ENCODE measurements at regions of chr14 and their contacts with region 1.

Region 1: GRCh38 chr14:69703047-69704039 is 63.6 kb upstream of the SRSF5 start:
- DNase-seq: no peak
- H3K4me3 Mint-ChIP-seq: no peak overlapping the region
- H3K27ac Mint-ChIP-seq: peak overlapping the region; percentile 60
- H3K4me1 Mint-ChIP-seq: peaks cover 69% of the 10 kb centered on the region
- H3K27me3 Mint-ChIP-seq: no peaks in the 10 kb centered on the region

Region 2: DNA sequence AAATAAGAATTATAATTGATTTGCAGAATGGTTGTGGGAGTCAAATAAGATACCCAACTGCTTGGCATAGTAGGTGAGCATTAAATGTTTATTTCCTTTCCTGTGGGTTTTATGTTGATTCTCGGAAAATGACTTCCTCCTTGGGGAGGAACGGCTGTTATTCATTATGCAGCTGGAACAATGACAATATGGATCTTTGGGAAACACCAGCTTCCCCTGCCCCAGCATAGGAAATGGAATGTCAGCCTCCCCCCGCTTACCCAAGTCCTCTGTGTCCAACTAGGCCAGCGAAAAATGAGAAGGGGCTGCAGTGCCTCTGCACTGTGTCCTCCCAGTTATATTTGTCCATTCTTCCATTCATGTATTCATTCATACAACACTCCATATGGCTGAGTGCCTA is 116.9 kb before region 1 on chr14:
- CTCF ChIA-PET with region 1: interaction called, 19 read pairs
- POLR2A ChIA-PET with region 1: no interaction called
- intact Hi-C with region 1: no loop called
- DNase-seq: no peak
- H3K4me3 Mint-ChIP-seq: no peak overlapping the region
- H3K27ac Mint-ChIP-seq: no peak overlapping the region
- H3K4me1 Mint-ChIP-seq: no peaks in the 10 kb centered on the region
- H3K27me3 Mint-ChIP-seq: no peaks in the 10 kb centered on the region

Region 3: DNA sequence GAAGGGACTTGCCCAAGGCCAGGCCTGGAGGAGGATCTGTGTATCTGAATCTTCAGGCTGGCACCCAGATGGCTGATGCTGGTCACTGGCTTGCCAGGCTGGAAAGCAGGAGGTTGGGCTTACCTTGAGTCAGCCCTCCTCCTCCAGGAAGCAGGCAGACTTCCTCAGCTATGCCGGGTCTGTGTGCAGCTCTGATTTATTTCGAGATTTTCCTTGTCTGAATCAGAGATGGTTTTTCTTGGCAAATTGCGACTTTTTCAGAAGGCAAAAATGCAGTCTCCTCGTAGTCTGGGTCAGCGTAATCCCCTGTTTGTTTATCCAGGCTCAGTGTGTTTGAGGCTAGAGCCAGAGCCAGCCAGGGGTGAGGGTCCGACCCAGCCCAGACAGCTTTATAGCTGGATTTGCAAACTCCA is 224.8 kb after region 1 on chr14:
- CTCF ChIA-PET with region 1: no interaction called
- POLR2A ChIA-PET with region 1: no interaction called
- intact Hi-C with region 1: no loop called
- DNase-seq: no peak
- H3K4me3 Mint-ChIP-seq: no peak overlapping the region
- H3K27ac Mint-ChIP-seq: no peak overlapping the region
- H3K4me1 Mint-ChIP-seq: no peaks in the 10 kb centered on the region
- H3K27me3 Mint-ChIP-seq: peaks cover 15% of the 10 kb centered on the region

Region 4: GRCh38 chr14:69956970-69957369 is 253.6 kb after region 1 on chr14:
- CTCF ChIA-PET with region 1: no interaction called
- POLR2A ChIA-PET with region 1: no interaction called
- intact Hi-C with region 1: no loop called
- DNase-seq: no peak
- H3K4me3 Mint-ChIP-seq: no peak overlapping the region
- H3K27ac Mint-ChIP-seq: no peak overlapping the region
- H3K4me1 Mint-ChIP-seq: no peaks in the 10 kb centered on the region
- H3K27me3 Mint-ChIP-seq: peaks cover 10% of the 10 kb centered on the region